ENCODE measurements at regions of chr15 and their contacts with region 1.

Region 1: GRCh38 chr15:31326156-31326732 is 391 bp upstream of the KLF13 start:
- DNase-seq: peak; percentile 97 to 100 (median 100)
- H3K4me3 ChIP-seq: peak overlapping the region in 1 of 2 donors; percentile 77
- H3K4me3 Mint-ChIP-seq: peak overlapping the region; percentile 53 to 90 (median 78)
- H3K27ac ChIP-seq: peak overlapping the region; percentile 92
- H3K27ac Mint-ChIP-seq: peak overlapping the region; percentile 64 to 92 (median 83)
- H3K4me1 ChIP-seq: peaks cover 43% of the 10 kb centered on the region
- H3K4me1 Mint-ChIP-seq: peaks cover 26 to 48% (median 37%) of the 10 kb centered on the region in 4 donors
- H3K27me3 ChIP-seq: no peaks in the 10 kb centered on the region
- H3K27me3 Mint-ChIP-seq: no peaks in the 10 kb centered on the region

Region 2: GRCh38 chr15:31200735-31201151 is 125.5 kb before region 1 on chr15:
- CTCF ChIA-PET with region 1: interaction called, 10 read pairs
- POLR2A ChIA-PET with region 1: interaction called, 14 read pairs
- intact Hi-C with region 1: loop called (anchors 5 kb)
- DNase-seq: peak; percentile 70 to 73 (median 71)
- H3K4me3 ChIP-seq: no peak overlapping the region
- H3K4me3 Mint-ChIP-seq: peak overlapping the region in 2 of 8 donors; percentile 20 to 26
- H3K27ac ChIP-seq: no peak overlapping the region
- H3K27ac Mint-ChIP-seq: peak overlapping the region in 4 of 7 donors; percentile 18 to 87 (median 38)
- H3K4me1 ChIP-seq: peaks cover 26% of the 10 kb centered on the region
- H3K4me1 Mint-ChIP-seq: peaks cover 9 to 30% (median 15%) of the 10 kb centered on the region in 4 donors
- H3K27me3 ChIP-seq: no peaks in the 10 kb centered on the region
- H3K27me3 Mint-ChIP-seq: no peaks in the 10 kb centered on the region

Region 3: GRCh38 chr15:31241888-31242522 is 84.2 kb before region 1 on chr15:
- CTCF ChIA-PET with region 1: interaction called, 4 read pairs
- POLR2A ChIA-PET with region 1: interaction called, 16 read pairs
- intact Hi-C with region 1: no loop called
- DNase-seq: peak in 4 of 5 donors; percentile 54 to 83 (median 74)
- H3K4me3 ChIP-seq: no peak overlapping the region
- H3K4me3 Mint-ChIP-seq: peak overlapping the region in 5 of 8 donors; percentile 41 to 73 (median 63)
- H3K27ac ChIP-seq: peak overlapping the region; percentile 0
- H3K27ac Mint-ChIP-seq: peak overlapping the region in 6 of 7 donors; percentile 79 to 98 (median 94)
- H3K4me1 ChIP-seq: peaks cover 29% of the 10 kb centered on the region
- H3K4me1 Mint-ChIP-seq: peaks cover 24 to 50% (median 35%) of the 10 kb centered on the region in 4 donors
- H3K27me3 ChIP-seq: no peaks in the 10 kb centered on the region
- H3K27me3 Mint-ChIP-seq: no peaks in the 10 kb centered on the region

Region 4: GRCh38 chr15:31338879-31339557 is 12.8 kb after region 1 on chr15:
- CTCF ChIA-PET with region 1: interaction called, 5 read pairs
- POLR2A ChIA-PET with region 1: interaction called, 91 read pairs
- intact Hi-C with region 1: loop called (anchors 1 kb)
- DNase-seq: no peak
- H3K4me3 ChIP-seq: no peak overlapping the region
- H3K4me3 Mint-ChIP-seq: peak overlapping the region in 7 of 8 donors; percentile 49 to 78 (median 72)
- H3K27ac ChIP-seq: peak overlapping the region; percentile 46
- H3K27ac Mint-ChIP-seq: peak overlapping the region; percentile 86 to 98 (median 91)
- H3K4me1 ChIP-seq: peaks cover 99% of the 10 kb centered on the region
- H3K4me1 Mint-ChIP-seq: peaks cover 71 to 100% (median 95%) of the 10 kb centered on the region in 4 donors
- H3K27me3 ChIP-seq: no peaks in the 10 kb centered on the region
- H3K27me3 Mint-ChIP-seq: no peaks in the 10 kb centered on the region

Region 5: DNA sequence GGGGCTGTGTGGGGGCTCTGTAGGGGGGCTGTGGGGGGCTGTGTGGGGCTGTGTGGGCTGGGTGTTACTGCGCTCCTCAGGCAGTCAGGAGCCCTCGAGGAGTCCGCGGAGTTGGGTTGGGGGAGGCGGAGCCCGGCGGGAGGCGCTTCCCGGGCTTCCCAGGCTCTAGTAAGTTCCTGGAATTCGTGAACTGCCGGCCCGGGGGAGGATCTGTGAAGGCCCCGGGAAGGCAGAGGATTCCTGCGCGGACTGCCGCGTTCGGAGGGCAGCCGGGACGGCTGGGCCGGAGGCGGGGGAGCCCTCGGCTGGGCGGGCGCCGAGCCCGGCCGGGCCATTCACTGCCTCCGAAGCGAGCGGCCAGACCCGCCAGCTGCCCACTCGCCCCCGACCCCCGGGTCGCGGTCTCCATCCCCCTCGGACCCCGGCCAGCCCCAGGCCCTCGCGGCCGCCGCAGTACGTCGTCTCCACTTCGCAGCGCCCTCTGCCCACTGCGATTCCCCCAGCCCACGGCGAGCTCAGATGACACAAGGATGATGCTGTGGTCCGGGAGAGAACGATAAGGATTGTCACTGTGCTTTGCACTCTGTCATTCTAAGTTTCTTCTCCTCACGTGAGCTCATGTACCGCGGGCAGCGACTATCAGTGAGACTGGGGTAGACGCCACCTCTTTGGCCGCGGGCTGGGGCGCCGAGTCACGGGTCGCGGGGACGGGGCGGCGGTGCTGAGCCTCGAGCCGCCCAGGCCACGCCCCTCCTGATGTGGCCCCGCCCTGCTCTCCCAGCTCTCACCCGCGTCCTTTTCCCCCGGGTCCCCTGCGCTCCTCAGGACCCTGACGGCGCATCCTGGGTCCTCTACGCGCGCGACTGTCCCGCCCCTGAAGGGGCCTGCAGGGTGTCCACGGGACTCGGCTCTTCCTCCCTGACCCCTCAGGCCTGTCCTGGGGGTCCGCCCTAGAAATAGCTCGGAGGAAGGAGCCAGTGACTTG is 65.7 kb after region 1 on chr15:
- CTCF ChIA-PET with region 1: interaction called, 4 read pairs
- POLR2A ChIA-PET with region 1: interaction called, 31 read pairs
- intact Hi-C with region 1: loop called (anchors 1 kb)
- DNase-seq: peak; percentile 78 to 87 (median 79)
- H3K4me3 ChIP-seq: peak overlapping the region; percentile 65 to 77
- H3K4me3 Mint-ChIP-seq: peak overlapping the region; percentile 87 to 96 (median 92)
- H3K27ac ChIP-seq: peak overlapping the region; percentile 57
- H3K27ac Mint-ChIP-seq: peak overlapping the region; percentile 81 to 98 (median 93)
- H3K4me1 ChIP-seq: peaks cover 28% of the 10 kb centered on the region
- H3K4me1 Mint-ChIP-seq: peaks cover 28 to 60% (median 39%) of the 10 kb centered on the region in 4 donors
- H3K27me3 ChIP-seq: no peaks in the 10 kb centered on the region
- H3K27me3 Mint-ChIP-seq: no peaks in the 10 kb centered on the region

Measured in CD4-positive, alpha-beta memory T cell (primary cell).